Calu3 (cell line): ENCODE measurements at regions of chr15 and their contacts with region 1.

Region 1: DNA sequence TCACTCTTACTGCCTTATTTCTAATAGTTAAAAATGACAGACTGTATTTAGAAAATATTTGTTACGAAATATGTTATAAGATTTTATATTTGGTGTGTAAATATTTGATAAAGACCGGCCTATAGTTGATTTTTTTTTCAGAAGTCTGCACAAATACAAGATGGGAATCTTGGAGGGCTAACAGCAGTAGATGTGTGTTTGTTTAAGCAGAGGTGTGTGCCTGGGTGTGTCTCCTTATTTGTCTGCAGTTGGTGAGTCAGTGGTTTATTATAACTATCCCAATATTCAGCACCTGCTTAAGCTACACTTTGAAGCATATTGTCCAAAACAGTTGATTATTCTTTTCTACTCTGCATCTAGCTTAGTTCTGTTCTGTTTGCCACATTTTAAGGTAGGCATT is 12.4 kb downstream of the GLCE start:
- DNase-seq: peak; percentile 16
- H3K4me3 Mint-ChIP-seq: no peak overlapping the region
- H3K27ac Mint-ChIP-seq: no peak overlapping the region
- H3K4me1 Mint-ChIP-seq: peaks cover 9% of the 10 kb centered on the region
- H3K27me3 Mint-ChIP-seq: no peaks in the 10 kb centered on the region
- CTCF ChIP-seq: no peak

Region 2: GRCh38 chr15:69209661-69210060 is 36.8 kb after region 1 on chr15:
- CTCF ChIA-PET with region 1: no interaction called
- intact Hi-C with region 1: loop called (anchors 5 kb)
- DNase-seq: no peak
- H3K4me3 Mint-ChIP-seq: no peak overlapping the region
- H3K27ac Mint-ChIP-seq: no peak overlapping the region
- H3K4me1 Mint-ChIP-seq: no peaks in the 10 kb centered on the region
- H3K27me3 Mint-ChIP-seq: no peaks in the 10 kb centered on the region
- CTCF ChIP-seq: no peak